ENCODE measurements at regions of chr2 and their contacts with region 1.

Region 1: GRCh38 chr2:29923110-29923721 is 1.8 kb upstream of the ALK start:
- DNase-seq: peak; percentile 32 to 70
- H3K4me3 ChIP-seq: no peak overlapping the region
- H3K4me1 ChIP-seq: no peaks in the 10 kb centered on the region
- H3K27me3 ChIP-seq: peaks cover 20% of the 10 kb centered on the region

Region 2: GRCh38 chr2:29281086-29281915 is 641.9 kb before region 1 on chr2:
- in situ Hi-C with region 1: no loop called
- DNase-seq: peak; percentile 60 to 82
- H3K4me3 ChIP-seq: no peak overlapping the region
- H3K4me1 ChIP-seq: peaks cover 8% of the 10 kb centered on the region; the same call in 1 of the 2 replicates
- H3K27me3 ChIP-seq: peaks cover 2% of the 10 kb centered on the region; the same call in 1 of the 2 replicates

Region 3: DNA sequence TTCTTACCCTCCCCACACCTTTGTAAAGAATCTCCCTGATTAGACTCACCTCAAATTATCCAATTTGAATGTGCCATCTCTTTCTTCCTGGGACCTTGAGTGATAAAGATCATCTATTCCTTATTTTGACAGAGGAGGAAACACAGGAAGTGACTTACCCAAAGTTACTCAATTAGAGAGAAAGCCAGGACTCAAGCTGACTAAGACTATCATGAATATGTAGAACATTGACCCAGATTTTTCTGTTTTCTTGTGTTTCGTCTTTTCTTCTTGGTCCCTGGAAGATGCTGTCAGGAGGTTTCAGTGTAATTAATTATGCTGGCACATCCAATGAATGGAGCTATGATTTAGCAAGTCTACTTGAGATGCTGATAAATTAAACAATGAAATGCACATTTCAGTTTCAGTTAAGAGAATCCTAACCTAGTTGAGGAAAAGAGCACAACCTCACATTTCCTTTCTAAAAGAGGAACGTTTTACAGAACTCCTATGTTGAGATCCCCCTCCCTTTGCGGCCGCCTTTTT is 427.6 kb before region 1 on chr2:
- in situ Hi-C with region 1: no loop called
- DNase-seq: no peak
- H3K4me3 ChIP-seq: no peak overlapping the region
- H3K4me1 ChIP-seq: no peaks in the 10 kb centered on the region
- H3K27me3 ChIP-seq: no peaks in the 10 kb centered on the region

Region 4: DNA sequence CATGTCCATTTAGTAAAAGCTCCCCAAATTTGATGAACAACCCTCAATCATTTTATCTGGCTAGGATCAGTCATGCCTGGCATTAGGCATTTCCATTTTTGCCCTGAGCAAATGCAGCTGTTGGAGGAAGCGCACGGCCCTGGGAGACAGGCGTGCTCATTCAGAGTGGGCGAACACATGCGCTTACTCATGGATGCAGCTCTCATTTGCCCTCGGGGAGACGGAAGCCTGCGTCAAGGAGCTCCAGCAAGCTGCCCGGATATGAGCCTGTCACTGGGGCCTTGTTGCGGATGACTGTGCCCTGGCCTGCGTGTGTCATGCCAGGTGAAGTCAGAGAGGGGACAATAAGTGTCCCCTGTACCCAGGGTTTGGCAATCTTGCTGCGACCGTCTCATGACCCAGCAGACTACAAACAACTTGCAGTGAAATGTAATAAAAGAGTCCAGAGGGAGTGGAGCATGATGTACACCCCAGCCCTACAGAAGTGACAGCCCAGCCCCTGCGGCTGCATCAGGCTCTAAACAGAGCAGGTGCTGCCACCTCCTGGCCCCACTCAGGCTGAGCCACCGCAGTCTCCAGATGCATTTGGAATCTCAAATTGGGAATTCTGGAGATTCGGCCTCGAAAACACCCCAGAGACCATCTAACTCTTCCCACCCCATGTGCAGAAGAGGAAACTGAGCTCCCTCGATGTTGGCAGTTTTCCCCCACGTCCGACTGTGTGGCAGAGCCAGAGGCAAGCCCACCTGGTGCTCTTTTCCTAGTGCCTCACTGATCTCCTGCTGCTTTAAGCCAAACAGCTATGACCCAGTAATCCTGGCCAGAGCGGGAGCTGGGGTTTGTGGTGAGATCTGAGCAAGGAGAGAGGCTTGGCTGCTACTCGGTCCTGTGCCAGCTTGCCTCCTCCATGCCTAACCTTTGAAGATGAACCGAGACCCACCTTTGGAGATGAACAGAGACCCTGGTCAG is 103.2 kb after region 1 on chr2:
- in situ Hi-C with region 1: loop called (anchors 10 kb)
- DNase-seq: peak; percentile 17 to 67
- H3K4me3 ChIP-seq: no peak overlapping the region
- H3K4me1 ChIP-seq: no peaks in the 10 kb centered on the region
- H3K27me3 ChIP-seq: peaks cover 8% of the 10 kb centered on the region

Measured in HAP-1 (cell line).